Left cardiac atrium (tissue), 4 donors: ENCODE measurements at regions of chr4 and their contacts with region 1.

Region 1: GRCh38 chr4:99563310-99564186 is at the start of gene TRMT10A:
- DNase-seq: peak; percentile 99
- ATAC-seq: peak; percentile 97 to 99
- total RNA-seq, gene TRMT10A: 2.4 to 3.4 TPM

Region 2: DNA sequence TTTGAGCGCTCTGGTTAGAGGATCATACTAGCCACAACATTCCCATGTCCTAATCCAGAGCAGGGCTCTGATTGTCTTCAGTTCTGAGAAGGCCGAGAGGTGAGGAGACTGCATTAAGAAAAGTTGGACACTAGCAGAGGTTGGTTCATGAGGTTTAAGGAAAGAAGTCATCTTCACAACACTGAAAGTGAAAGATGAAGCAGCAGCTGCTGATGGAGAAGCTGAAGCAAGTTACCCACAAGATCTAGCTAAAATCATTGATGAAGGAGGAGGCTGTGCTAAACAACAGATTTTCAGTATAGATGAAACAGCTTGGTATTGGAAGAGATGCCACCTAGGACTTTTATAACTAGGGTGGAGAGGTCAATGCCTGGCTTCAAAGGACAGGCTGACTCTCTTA is 1265.5 kb before region 1 on chr4:
- intact Hi-C with region 1: no loop called
- DNase-seq: no peak
- ATAC-seq: no peak

Region 3: DNA sequence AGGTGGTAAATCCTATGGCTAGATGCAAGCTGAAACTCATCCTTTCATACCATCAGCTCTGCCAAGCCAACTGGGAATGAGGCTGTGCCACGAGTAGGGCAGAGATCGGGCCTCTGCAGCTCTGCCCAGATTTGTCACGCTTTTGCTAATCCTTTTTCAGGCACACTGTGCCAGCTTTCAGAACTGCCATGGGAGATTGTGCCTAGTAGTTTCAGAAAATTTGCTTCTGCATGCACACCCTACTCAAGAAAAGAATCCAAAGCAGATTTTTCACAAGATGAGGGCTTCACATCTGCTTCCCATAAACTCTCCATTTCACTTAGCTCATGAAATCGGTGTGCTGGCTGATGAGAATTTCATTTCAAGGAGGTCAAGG is 125.2 kb before region 1 on chr4:
- intact Hi-C with region 1: no loop called
- DNase-seq: no peak
- ATAC-seq: no peak

Region 4: DNA sequence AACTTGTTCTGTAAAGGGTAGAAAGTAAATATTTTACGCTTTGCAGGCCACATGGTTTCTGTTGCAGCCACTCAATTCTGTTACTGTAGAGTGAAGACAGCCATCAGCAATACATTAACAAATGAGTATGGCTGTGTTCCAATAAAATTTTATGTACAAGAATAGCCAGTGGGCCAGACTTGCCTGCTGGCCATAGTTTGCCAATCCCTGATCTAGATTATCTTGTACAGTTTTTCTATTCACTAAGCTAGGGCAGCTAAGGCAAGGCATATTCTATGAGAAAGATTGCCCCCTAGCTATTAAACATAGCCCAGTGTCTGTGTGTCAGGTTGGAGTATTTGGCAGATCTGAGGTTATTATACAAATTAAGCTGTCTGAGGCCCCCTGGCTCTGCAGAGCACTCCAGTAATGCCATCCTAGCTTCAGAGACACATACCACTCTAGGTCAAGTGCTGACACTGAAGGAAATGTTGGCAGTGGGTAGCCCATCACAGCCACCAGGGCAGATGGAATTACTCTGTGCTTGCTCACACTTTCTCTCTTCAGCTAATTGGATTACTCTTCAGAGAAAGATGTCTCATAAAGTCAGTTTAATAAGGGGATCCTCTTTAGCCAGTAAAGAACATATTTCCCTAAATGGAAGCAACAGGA is 51.7 kb after region 1 on chr4:
- intact Hi-C with region 1: loop called in 1 of 2 experiments (anchors 5 kb)
- DNase-seq: peak; percentile 15
- ATAC-seq: peak; percentile 96 to 98

Region 5: GRCh38 chr4:99665983-99666382 is 102.4 kb after region 1 on chr4:
- intact Hi-C with region 1: loop called in 1 of 2 experiments (anchors 10 kb)
- DNase-seq: no peak
- ATAC-seq: no peak

Region 6: GRCh38 chr4:99723612-99724011 is 160.1 kb after region 1 on chr4:
- intact Hi-C with region 1: loop called in 1 of 2 experiments (anchors 10 kb)
- DNase-seq: peak; percentile 64
- ATAC-seq: peak; percentile 77 to 98

Region 7: GRCh38 chr4:99808260-99808857 is 244.8 kb after region 1 on chr4:
- intact Hi-C with region 1: loop called (anchors 1 to 10 kb)
- DNase-seq: peak; percentile 48
- ATAC-seq: peak; percentile 43 to 86

Region 8: GRCh38 chr4:99894161-99894997 is 330.8 kb after region 1 on chr4 and contains the start of gene LAMTOR3:
- intact Hi-C with region 1: loop called in 1 of 2 experiments (anchors 5 kb)
- DNase-seq: peak; percentile 93
- ATAC-seq: peak; percentile 99
- total RNA-seq, gene LAMTOR3: 29.2 to 32.3 TPM

Region 9: DNA sequence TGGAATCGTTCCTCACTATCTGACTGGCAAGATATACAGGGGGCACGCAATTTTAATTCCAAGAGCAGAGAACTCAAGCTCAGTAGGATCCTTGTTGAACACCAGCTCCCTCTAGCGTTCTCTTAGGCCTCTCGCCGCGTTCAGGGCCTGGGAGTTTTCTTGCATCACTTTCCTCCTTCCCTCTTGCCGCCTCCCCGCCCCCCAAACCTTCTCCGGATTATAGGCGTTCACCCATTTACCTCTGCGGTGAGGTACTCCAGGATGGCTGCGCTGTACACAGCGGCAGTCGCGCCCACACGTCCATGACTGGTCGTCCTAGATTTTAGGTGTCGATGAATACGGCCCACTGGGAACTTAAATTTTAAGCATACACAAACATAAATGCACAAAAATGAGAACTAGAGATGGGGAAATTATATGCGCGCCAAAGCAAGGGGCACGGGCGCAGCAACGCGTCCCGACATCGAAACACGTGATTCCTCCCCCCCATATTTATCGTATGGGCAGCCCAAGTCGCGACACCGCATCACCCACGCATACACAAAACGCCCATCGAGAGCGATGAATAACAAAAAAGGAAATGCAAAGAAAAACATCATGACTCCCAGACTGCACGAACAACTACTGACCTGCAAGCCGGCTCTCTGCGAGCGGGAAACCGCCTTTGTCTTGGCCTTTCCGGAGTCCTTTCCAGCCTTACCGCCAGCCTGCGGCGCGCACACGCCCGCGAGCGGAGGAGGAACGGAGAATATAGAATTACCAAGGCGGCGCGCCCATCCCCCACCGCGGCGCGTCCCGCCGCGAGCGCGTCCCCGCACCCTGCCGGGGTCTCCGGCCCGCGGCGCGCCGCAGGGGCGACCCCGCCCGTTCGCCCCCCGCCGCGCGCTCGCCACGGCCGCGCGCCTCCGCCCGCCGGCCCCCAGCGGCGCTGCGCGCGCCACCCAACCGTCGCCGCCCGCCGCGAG is 385.8 kb after region 1 on chr4:
- intact Hi-C with region 1: loop called in 1 of 2 experiments (anchors 5 kb)
- DNase-seq: peak; percentile 87
- ATAC-seq: peak; percentile 35 to 39